Mammary epithelial cell (primary cell): ENCODE measurements at regions of chr6 and their contacts with region 1.

Region 1: DNA sequence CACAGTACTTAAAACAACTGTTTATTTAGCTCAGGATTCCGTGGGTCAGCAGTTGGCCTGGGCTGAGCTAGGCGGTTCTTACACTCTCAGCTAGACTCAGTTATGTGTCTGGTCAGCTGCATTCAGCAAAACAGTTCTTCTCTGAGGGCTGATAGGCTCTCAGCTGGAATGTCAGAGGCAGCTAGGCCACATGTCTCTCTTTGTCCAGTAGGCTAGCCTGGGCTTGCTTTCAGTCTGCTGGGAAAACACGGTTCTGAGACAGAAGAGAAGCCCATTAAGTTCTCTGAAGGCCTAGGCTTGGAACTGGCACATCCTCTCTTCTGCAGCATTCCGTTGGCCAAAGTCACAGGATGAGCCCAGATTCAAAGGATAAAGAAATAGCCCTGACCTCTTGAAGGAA is 65.6 kb downstream of the TULP4 start:
- DNase-seq: peak; percentile 97
- H3K4me3 ChIP-seq: no peak overlapping the region
- H3K27ac ChIP-seq: peak overlapping the region; percentile 76
- H3K4me1 ChIP-seq: peaks cover 76% of the 10 kb centered on the region
- H3K27me3 ChIP-seq: no peaks in the 10 kb centered on the region
- CTCF ChIP-seq: no peak

Region 2: GRCh38 chr6:158396136-158396535 is 18.3 kb after region 1 on chr6:
- CTCF ChIA-PET with region 1: interaction called, 12 read pairs
- dilution Hi-C with region 1: no loop called
- in situ Hi-C with region 1: no loop called
- intact Hi-C with region 1: no loop called
- DNase-seq: no peak
- H3K4me3 ChIP-seq: no peak overlapping the region
- H3K27ac ChIP-seq: no peak overlapping the region
- H3K4me1 ChIP-seq: no peaks in the 10 kb centered on the region
- H3K27me3 ChIP-seq: no peaks in the 10 kb centered on the region
- CTCF ChIP-seq: no peak

Region 3: GRCh38 chr6:158411998-158412397 is 34.1 kb after region 1 on chr6:
- CTCF ChIA-PET with region 1: no interaction called
- dilution Hi-C with region 1: no loop called
- in situ Hi-C with region 1: no loop called
- intact Hi-C with region 1: loop called (anchors 1 kb)
- DNase-seq: peak; percentile 88
- H3K4me3 ChIP-seq: no peak overlapping the region
- H3K27ac ChIP-seq: peak overlapping the region; percentile 60
- H3K4me1 ChIP-seq: peaks cover 59% of the 10 kb centered on the region
- H3K27me3 ChIP-seq: no peaks in the 10 kb centered on the region
- CTCF ChIP-seq: no peak